ENCODE measurements at regions of chrX and their contacts with region 1.

Region 1: GRCh38 chrX:53093748-53094583 is at the start of gene KANTR:
- DNase-seq: peak; percentile 97
- H3K4me3 ChIP-seq: peak within 1 kb of the TSS; percentile 65
- H3K27ac ChIP-seq: peak within 1 kb of the TSS; percentile 87
- H3K4me1 ChIP-seq: peaks cover 5% of the 10 kb centered on the region
- H3K27me3 ChIP-seq: no peaks in the 10 kb centered on the region
- CTCF ChIP-seq: no peak
- total RNA-seq, gene KANTR: 15.1 and 15.4 TPM in 2 replicates

Region 2: GRCh38 chrX:52995135-52996020 is 98.6 kb before region 1 on chrX:
- CTCF ChIA-PET with region 1: no interaction called
- POLR2A ChIA-PET with region 1: no interaction called
- intact Hi-C with region 1: loop called (anchors 1 kb)
- DNase-seq: peak; percentile 97
- H3K4me3 ChIP-seq: peak overlapping the region; percentile 77
- H3K27ac ChIP-seq: peak overlapping the region; percentile 95
- H3K4me1 ChIP-seq: no peaks in the 10 kb centered on the region
- H3K27me3 ChIP-seq: no peaks in the 10 kb centered on the region
- CTCF ChIP-seq: peak; percentile 63

Region 3: DNA sequence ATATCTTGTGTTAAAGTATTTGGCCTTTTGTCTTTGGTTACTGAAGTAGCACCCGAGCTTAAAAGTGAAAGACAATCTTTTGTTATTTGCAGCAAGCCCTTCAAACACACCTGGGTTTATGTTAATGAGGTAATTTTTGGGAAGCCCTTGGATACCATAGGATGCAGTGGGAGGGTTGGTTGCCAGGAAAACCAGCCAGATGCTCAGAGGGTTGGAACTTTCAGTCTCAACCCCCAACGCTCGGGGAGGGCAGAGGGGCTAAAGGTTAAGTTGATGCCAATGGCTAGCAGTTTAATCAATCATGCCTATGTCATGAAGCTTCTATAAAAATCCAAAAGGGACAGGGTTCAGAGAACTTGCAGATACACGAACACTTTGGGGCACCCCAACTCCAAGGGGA is 62.6 kb before region 1 on chrX:
- CTCF ChIA-PET with region 1: no interaction called
- POLR2A ChIA-PET with region 1: no interaction called
- intact Hi-C with region 1: no loop called
- DNase-seq: no peak
- H3K4me3 ChIP-seq: no peak overlapping the region
- H3K27ac ChIP-seq: no peak overlapping the region
- H3K4me1 ChIP-seq: no peaks in the 10 kb centered on the region
- H3K27me3 ChIP-seq: no peaks in the 10 kb centered on the region
- CTCF ChIP-seq: no peak

Region 4: GRCh38 chrX:53056292-53056691 is 37.7 kb before region 1 on chrX:
- CTCF ChIA-PET with region 1: no interaction called
- POLR2A ChIA-PET with region 1: no interaction called
- intact Hi-C with region 1: no loop called
- DNase-seq: no peak
- H3K4me3 ChIP-seq: no peak overlapping the region
- H3K27ac ChIP-seq: no peak overlapping the region
- H3K4me1 ChIP-seq: no peaks in the 10 kb centered on the region
- H3K27me3 ChIP-seq: no peaks in the 10 kb centered on the region
- CTCF ChIP-seq: no peak

Region 5: GRCh38 chrX:53071604-53072417 is 22.2 kb before region 1 on chrX:
- CTCF ChIA-PET with region 1: no interaction called
- POLR2A ChIA-PET with region 1: no interaction called
- intact Hi-C with region 1: loop called (anchors 1 kb)
- DNase-seq: peak; percentile 81
- H3K4me3 ChIP-seq: peak overlapping the region; percentile 54
- H3K27ac ChIP-seq: no peak overlapping the region
- H3K4me1 ChIP-seq: no peaks in the 10 kb centered on the region
- H3K27me3 ChIP-seq: no peaks in the 10 kb centered on the region
- CTCF ChIP-seq: peak; percentile 79

Region 6: DNA sequence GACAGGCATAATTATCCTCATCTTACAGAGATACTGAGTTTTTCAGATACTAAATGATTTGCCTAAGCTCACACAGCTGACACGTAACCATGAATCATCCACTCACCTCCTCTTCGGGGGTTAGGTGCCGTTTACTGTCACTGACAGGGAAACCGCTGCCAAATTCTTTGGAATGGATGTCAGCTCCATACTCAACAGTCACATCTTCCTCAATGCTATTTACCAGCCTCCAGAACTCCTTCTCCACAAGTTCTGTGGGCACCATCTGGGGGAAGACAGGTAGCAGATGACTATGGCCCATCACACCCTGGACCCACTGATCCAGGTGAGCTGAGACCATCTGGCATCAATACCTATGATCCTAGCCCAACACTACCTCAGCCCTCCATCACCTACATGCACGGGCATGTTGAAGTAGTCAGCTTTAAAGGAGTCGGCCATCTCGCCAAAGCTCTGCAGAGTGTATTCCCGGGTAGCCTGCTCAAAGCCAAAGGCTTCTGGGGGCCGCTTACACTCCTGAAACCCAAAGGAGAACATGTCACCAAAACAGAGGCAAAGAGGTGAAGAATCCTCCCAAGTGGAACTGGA is 117.5 kb after region 1 on chrX:
- CTCF ChIA-PET with region 1: interaction called, 13 read pairs
- POLR2A ChIA-PET with region 1: no interaction called
- intact Hi-C with region 1: no loop called
- DNase-seq: no peak
- H3K4me3 ChIP-seq: no peak overlapping the region
- H3K27ac ChIP-seq: no peak overlapping the region
- H3K4me1 ChIP-seq: no peaks in the 10 kb centered on the region
- H3K27me3 ChIP-seq: no peaks in the 10 kb centered on the region
- CTCF ChIP-seq: no peak